Esophagus squamous epithelium (tissue), 5 donors: ENCODE measurements at regions of chr2 and their contacts with region 1.

Region 1: GRCh38 chr2:38734299-38735058 is 16.7 kb downstream of the SRSF7 start:
- DNase-seq: no peak
- H3K4me3 ChIP-seq: no peak overlapping the region
- H3K27ac ChIP-seq: peak overlapping the region in 2 of 4 donors; percentile 11 to 30
- H3K4me1 ChIP-seq: peaks cover 0 to 30% (median 6%) of the 10 kb centered on the region in 3 donors
- H3K27me3 ChIP-seq: no peaks in the 10 kb centered on the region
- CTCF ChIP-seq: no peak
- POLR2A ChIP-seq: no peak

Region 2: DNA sequence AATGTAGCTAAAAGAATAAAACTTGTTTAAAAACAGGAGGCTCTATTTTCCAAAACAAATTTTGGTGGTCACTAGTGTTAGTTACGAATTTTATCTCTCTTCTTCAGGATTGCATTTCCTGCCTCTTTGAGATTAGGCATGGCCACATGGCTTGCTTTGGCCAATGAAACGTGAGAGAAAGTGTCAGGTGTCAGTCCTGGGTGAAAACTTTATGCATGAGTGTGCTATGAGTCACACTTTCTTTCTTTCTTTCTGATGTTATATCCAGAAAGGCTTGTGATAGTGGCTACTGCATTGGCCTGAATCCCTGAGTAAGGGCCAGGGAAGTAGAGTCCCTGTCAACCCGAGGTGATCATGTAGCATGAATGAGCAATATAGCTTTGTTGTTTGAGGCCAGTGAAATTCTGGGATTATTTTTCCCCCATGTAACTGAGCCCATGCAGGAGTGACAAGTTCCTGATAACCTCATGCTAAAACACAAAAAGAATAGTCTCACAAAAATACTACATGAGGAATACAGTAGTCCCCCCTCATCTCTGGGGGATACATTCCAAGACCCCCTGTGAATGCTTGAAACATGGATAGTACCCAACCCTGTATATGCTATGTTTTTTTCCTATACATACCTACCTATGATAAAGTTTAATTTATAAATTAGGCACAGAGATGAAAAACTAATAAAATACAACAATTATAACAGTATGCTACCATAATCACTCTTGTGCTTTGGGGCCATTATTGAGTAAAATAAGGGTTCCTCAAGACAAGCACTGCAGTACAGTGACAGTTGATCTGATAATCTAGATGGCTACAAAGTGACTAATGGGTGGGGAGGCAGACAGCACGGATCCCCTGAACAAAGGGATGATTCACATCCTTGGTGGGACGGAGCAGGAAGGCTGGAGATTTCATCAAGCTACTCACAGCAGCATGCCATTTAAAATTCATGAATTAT is 1172.6 kb before region 1 on chr2:
- intact Hi-C with region 1: no loop called
- DNase-seq: no peak
- H3K4me3 ChIP-seq: no peak overlapping the region
- H3K27ac ChIP-seq: no peak overlapping the region
- H3K4me1 ChIP-seq: peaks cover 0 to 15% (median 3%) of the 10 kb centered on the region in 3 donors
- H3K27me3 ChIP-seq: no peaks in the 10 kb centered on the region
- CTCF ChIP-seq: no peak
- POLR2A ChIP-seq: no peak

Region 3: GRCh38 chr2:38598996-38599304 is 135.5 kb before region 1 on chr2:
- intact Hi-C with region 1: loop called (anchors 5 kb)
- DNase-seq: no peak
- H3K4me3 ChIP-seq: peak overlapping the region in 2 of 4 donors; percentile 32 to 89
- H3K27ac ChIP-seq: peak overlapping the region in 3 of 4 donors; percentile 73 to 98 (median 97)
- H3K4me1 ChIP-seq: peaks cover 0 to 78% (median 15%) of the 10 kb centered on the region in 3 donors
- H3K27me3 ChIP-seq: no peaks in the 10 kb centered on the region
- CTCF ChIP-seq: no peak
- POLR2A ChIP-seq: no peak